HepG2 (cell line): ENCODE measurements at regions of chr16 and their contacts with region 1.

Region 1: GRCh38 chr16:73196670-73197069 is 148.7 kb upstream of the ZFHX3 start:
- DNase-seq: peak; percentile 70
- ATAC-seq: peak; percentile 99
- H3K4me3 ChIP-seq: no peak overlapping the region
- H3K27ac ChIP-seq: no peak overlapping the region
- H3K4me1 ChIP-seq: peaks cover 5% of the 10 kb centered on the region
- H3K27me3 ChIP-seq: peaks cover 0 to 16% of the 10 kb centered on the region in 2 experiments; a peak in 1 of 5 replicates
- CTCF ChIP-seq: peak; percentile 95
- EP300 ChIP-seq: no peak
- POLR2A ChIP-seq: no peak
- RAD21 ChIP-seq: peak; percentile 85

Region 2: GRCh38 chr16:72832621-72833248 is 363.9 kb before region 1 on chr16:
- CTCF ChIA-PET with region 1: interaction called, 21 read pairs
- POLR2A ChIA-PET with region 1: interaction called, 4 read pairs
- in situ Hi-C with region 1: loop called (anchors 10 kb)
- intact Hi-C with region 1: loop called (anchors 2 kb)
- DNase-seq: peak; percentile 55
- ATAC-seq: peak; percentile 93
- H3K4me3 ChIP-seq: no peak overlapping the region
- H3K27ac ChIP-seq: no peak overlapping the region
- H3K4me1 ChIP-seq: no peaks in the 10 kb centered on the region
- H3K27me3 ChIP-seq: no peaks in the 10 kb centered on the region
- CTCF ChIP-seq: peak; percentile 95
- EP300 ChIP-seq: no peak
- POLR2A ChIP-seq: no peak
- RAD21 ChIP-seq: peak; percentile 93

Region 3: GRCh38 chr16:72961121-72961763 is 235.4 kb before region 1 on chr16:
- CTCF ChIA-PET with region 1: no interaction called
- POLR2A ChIA-PET with region 1: no interaction called
- in situ Hi-C with region 1: no loop called
- intact Hi-C with region 1: loop called (anchors 10 kb)
- DNase-seq: no peak
- ATAC-seq: no peak
- H3K4me3 ChIP-seq: no peak overlapping the region
- H3K27ac ChIP-seq: no peak overlapping the region
- H3K4me1 ChIP-seq: no peaks in the 10 kb centered on the region
- H3K27me3 ChIP-seq: no peaks in the 10 kb centered on the region
- CTCF ChIP-seq: peak; percentile 27; the same call in 1 of the 2 replicates
- EP300 ChIP-seq: no peak
- POLR2A ChIP-seq: no peak
- RAD21 ChIP-seq: peak; percentile 27; the same call in 1 of the 2 replicates

Region 4: GRCh38 chr16:73058221-73058615 is 138.5 kb before region 1 on chr16:
- CTCF ChIA-PET with region 1: no interaction called
- POLR2A ChIA-PET with region 1: no interaction called
- in situ Hi-C with region 1: no loop called
- intact Hi-C with region 1: loop called (anchors 5 kb)
- DNase-seq: no peak
- ATAC-seq: no peak
- H3K4me3 ChIP-seq: peak overlapping the region; percentile 75 to 78 (median 77); a peak in 4 of 6 replicates
- H3K27ac ChIP-seq: peak overlapping the region; percentile 57
- H3K4me1 ChIP-seq: peaks cover 53% of the 10 kb centered on the region
- H3K27me3 ChIP-seq: no peaks in the 10 kb centered on the region
- CTCF ChIP-seq: no peak
- EP300 ChIP-seq: no peak
- POLR2A ChIP-seq: no peak
- RAD21 ChIP-seq: peak; percentile 26; the same call in 1 of the 2 replicates

Region 5: DNA sequence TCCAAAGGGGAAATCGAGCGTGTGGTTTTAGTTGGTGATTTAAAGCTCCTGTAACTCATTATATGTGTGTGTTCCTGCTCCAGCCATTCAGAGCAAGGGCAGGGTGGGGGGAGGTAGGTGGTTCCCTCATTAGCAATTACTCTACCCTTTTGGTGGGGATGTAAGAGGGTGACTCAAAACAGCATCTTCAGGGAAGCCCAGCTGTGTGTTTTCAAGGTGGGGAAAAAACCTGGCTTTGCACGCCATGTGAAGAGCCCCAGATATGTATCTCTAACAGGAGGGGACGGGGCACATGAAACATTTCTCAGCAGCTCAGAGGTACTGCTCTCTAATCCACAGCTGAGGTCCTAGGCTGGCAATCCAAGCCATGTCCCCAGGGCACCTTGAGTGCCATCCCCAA is 92.6 kb after region 1 on chr16:
- CTCF ChIA-PET with region 1: no interaction called
- POLR2A ChIA-PET with region 1: no interaction called
- in situ Hi-C with region 1: no loop called
- intact Hi-C with region 1: no loop called
- DNase-seq: no peak
- ATAC-seq: no peak
- H3K4me3 ChIP-seq: no peak overlapping the region
- H3K27ac ChIP-seq: no peak overlapping the region
- H3K4me1 ChIP-seq: no peaks in the 10 kb centered on the region
- H3K27me3 ChIP-seq: peaks cover 8 to 43% of the 10 kb centered on the region in 2 experiments
- CTCF ChIP-seq: no peak
- EP300 ChIP-seq: no peak
- POLR2A ChIP-seq: no peak
- RAD21 ChIP-seq: no peak